AG04449 (cell line): ENCODE measurements at regions of chr21 and their contacts with region 1.

Region 1: DNA sequence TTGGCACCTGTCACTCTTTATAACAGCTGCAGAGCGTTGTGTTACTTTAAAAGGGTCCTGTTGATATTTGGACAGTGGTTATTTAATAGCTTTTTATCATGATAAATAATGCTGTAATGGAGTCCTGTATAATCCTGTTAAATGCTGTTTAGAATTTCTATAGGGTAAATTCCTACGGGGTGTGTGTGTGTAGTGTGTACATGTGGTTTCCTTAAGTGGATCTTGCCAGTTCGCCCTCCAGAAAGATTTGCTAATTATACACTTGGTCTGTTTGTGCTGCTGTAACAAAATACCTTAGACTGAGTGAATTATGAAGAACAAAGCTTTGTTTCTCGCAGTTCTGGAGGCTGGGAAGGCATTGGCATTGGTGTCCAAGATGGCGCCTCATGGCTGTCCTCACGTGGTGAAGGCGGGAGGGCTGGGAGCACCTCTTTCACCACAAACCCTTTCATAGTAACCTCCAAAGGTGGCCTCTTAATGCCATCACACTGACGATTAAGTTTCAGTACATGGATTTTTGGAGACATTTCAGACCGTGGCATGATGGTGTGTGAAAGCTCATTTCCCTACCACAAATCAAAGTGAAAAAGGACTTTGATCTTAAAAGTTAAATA is 11.2 kb downstream of the PRMT2 start:
- DNase-seq: no peak
- H3K4me3 ChIP-seq: no peak overlapping the region
- CTCF ChIP-seq: no peak

Region 2: DNA sequence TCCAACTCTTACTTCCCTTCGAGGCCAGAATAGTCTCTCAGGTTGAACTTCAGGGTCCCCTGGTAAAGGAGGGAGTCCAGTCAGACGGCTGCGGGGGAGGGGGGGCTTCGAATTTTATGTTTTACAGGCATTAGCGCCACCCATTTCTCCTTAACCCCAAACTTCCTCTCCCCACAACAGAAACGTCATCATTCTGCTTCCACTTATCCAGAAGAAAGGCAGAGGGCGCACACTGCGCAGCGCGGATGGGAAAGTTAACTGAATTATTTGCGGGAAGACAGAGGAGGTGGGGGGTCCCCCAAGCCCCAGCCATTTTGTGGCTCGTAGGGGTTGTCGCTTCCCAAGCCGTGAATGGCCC is 11.7 kb before region 1 on chr21:
- CTCF ChIA-PET with region 1: interaction called, 10 read pairs
- POLR2A ChIA-PET with region 1: interaction called, 3 read pairs
- DNase-seq: peak; percentile 44
- H3K4me3 ChIP-seq: peak overlapping the region; percentile 100
- CTCF ChIP-seq: peak; percentile 48

Region 3: DNA sequence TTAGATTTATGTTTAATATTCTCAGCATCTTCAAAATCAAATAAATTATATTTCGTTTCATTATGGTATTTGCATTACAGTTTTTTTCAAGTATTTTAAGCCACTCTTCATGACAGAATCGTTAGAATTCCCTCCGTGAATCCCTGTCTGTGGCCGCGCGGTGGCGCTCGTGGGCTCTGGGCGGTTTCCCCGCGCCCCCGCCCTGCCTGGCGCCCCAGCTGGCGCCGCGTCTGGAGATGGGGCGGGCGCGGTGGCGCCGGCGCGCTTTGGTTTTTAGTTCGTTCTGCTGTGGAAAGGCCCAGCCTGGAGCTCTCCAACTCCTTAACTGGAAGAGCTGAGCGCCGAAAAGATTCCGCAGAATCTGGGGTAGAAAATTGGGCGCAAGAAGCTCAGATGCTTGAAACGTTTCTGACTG is 14.6 kb after region 1 on chr21:
- CTCF ChIA-PET with region 1: interaction called, 10 read pairs
- POLR2A ChIA-PET with region 1: no interaction called
- DNase-seq: peak; percentile 21
- H3K4me3 ChIP-seq: peak overlapping the region; percentile 29
- CTCF ChIP-seq: peak; percentile 76